Natural killer cell (primary cell): ENCODE measurements at regions of chr9 and their contacts with region 1.

Region 1: GRCh38 chr9:15349892-15350778 is 43.1 kb upstream of the TTC39B start:
- DNase-seq: no peak
- ATAC-seq: no peak
- H3K4me3 ChIP-seq: no peak overlapping the region
- H3K4me3 Mint-ChIP-seq: no peak overlapping the region
- H3K27ac ChIP-seq: no peak overlapping the region
- H3K27ac Mint-ChIP-seq: no peak overlapping the region
- H3K4me1 ChIP-seq: no peaks in the 10 kb centered on the region
- H3K4me1 Mint-ChIP-seq: peaks cover 24 to 39% of the 10 kb centered on the region in 2 donors
- H3K27me3 ChIP-seq: no peaks in the 10 kb centered on the region
- H3K27me3 Mint-ChIP-seq: no peaks in the 10 kb centered on the region
- CTCF ChIP-seq: no peak

Region 2: GRCh38 chr9:15271403-15271802 is 78.7 kb before region 1 on chr9:
- intact Hi-C with region 1: loop called (anchors 5 kb)
- DNase-seq: peak; percentile 35 to 51
- ATAC-seq: peak; percentile 85 to 100 (median 97)
- H3K4me3 ChIP-seq: no peak overlapping the region
- H3K4me3 Mint-ChIP-seq: no peak overlapping the region
- H3K27ac ChIP-seq: no peak overlapping the region
- H3K27ac Mint-ChIP-seq: peak overlapping the region in 1 of 2 donors; percentile 27
- H3K4me1 ChIP-seq: peaks cover 11% of the 10 kb centered on the region
- H3K4me1 Mint-ChIP-seq: peaks cover 49 to 60% of the 10 kb centered on the region in 2 donors
- H3K27me3 ChIP-seq: no peaks in the 10 kb centered on the region
- H3K27me3 Mint-ChIP-seq: no peaks in the 10 kb centered on the region
- CTCF ChIP-seq: peak; percentile 18